Right ventricle myocardium superior (tissue), 1 donor: ENCODE measurements at regions of chr16 and their contacts with region 1.

Region 1: DNA sequence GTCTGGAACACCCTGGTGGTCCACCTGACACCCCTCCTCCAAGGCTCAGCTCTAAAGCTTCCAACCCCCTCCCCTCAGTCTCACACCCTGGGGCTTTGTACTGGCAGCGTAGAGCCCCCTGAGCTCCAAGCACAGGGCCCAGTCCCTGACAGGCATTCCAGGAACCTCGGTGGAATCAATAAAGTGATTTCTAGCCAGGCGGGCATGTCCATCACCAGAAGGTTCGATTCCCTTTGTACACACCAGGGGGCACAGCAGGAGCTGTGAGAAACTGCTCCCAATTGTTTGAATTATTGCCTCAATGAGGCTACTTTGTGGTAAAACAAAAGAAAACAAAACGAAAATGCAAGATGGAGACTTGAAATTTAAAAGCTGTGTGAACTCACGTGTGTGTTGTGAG is 51.8 kb downstream of the SMPD3 start:
- DNase-seq: no peak
- ATAC-seq: no peak

Region 2: DNA sequence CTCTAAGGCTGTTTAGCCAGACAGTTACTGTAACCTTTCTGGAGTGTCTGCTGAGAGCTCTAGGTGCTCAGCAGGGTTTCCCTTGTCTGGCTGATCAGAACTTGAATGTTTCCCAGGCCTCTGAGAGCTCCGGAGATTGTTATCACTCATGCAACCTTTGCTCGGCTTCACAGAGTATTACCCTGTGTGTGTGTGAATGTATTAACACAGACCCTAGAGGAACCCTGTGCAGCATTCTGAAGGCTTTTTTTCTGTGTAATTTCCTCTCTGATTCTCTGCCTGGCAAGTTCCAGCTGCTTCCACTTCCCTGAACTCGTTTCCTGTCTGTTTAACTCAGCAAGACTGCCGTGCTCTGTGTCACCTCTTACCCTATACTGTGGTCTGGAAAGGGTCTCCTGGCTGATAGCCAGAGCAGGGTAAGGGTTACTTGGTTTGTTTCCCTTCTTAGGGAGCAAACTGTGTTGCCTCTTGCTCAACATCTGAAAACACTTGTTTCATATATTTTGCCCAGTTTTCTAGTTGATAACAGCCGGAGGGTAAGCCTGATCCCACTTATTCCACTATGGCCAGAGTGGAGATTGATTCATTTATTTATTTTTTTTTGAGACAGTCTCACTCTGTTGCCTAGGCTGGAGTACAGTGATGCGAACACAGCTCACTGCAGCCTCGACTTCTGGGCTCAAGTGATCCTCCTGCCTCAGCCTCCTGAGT is 63.9 kb before region 1 on chr16:
- intact Hi-C with region 1: no loop called
- DNase-seq: no peak
- ATAC-seq: peak; percentile 46

Region 3: DNA sequence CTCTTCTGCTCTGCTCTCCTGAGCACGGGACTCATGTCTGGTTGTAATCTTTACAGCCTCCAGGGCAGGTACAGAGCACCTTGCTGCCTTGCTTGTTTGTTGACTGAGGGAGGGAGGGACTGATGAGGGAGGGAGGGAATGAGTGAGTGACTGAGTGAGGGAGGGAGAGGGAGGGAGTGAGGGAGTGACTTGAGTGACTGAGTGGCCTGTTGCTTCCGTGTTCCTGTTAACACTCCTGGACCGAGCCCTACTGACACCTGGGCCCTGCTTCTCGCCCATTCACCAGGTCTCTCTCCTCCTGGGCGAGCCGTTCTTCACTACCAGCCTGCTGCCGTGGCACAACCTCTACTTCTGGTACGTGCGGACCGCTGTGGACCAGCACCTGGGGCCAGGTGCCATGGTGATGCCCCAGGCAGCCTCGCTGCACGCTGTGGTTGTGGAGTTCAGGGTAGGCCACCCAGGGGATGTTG is 44.5 kb before region 1 on chr16:
- intact Hi-C with region 1: no loop called
- DNase-seq: no peak
- ATAC-seq: peak; percentile 39

Region 4: DNA sequence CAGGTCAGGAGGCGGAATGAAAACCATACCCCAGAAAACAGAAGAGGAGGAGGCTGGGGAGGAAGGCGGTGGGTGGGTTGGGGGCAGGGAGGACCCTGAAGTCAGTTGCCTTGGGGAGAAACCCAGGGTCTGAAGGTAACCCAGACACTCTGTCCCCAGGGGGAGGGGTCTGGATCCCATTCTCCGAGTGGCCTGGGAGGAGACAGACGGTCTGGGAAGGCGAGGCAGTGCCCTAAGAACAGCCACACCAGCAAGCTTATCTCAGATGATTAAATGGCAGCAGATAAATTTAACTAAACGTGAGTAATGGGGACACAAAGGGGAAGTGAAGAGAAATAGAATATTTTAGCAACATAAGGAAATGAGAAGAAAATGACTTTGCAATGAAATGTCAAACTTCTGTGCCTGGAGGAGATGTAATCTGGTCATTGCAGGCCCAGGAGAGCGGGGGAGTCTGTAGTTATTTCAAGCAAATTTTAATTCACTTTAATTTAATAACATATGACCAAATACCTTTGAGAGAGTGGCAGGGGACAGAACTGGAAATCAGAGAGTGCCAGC is 121.2 kb after region 1 on chr16:
- intact Hi-C with region 1: loop called (anchors 10 kb)
- DNase-seq: no peak
- ATAC-seq: no peak